Naive thymus-derived CD4-positive, alpha-beta T cell (primary cell): ENCODE measurements at regions of chr11 and their contacts with region 1.

Region 1: GRCh38 chr11:313787-314547 is at the start of gene IFITM1:
- DNase-seq: peak in 8 of 9 donors; percentile 55 to 80 (median 76)
- ATAC-seq: peak; percentile 72
- H3K4me3 ChIP-seq: peak within 1 kb of the TSS; percentile 71
- H3K4me3 Mint-ChIP-seq: peak within 1 kb of the TSS; percentile 88 to 100 (median 96)
- H3K27ac ChIP-seq: peak within 1 kb of the TSS; percentile 95
- H3K27ac Mint-ChIP-seq: peak within 1 kb of the TSS; percentile 94 to 99 (median 99)
- H3K4me1 ChIP-seq: peaks cover 13 to 37% of the 10 kb centered on the region in 2 donors
- H3K4me1 Mint-ChIP-seq: peaks cover 26 to 43% (median 34%) of the 10 kb centered on the region in 7 donors
- H3K27me3 ChIP-seq: no peaks in the 10 kb centered on the region
- H3K27me3 Mint-ChIP-seq: peaks cover 0 to 3% (median 0%) of the 10 kb centered on the region in 5 donors
- total RNA-seq, gene IFITM1: 97.4 to 985 (median 241) TPM

Region 2: GRCh38 chr11:236774-237767 is 76.9 kb before region 1 on chr11 and contains the start of gene PSMD13:
- CTCF ChIA-PET with region 1: no interaction called
- POLR2A ChIA-PET with region 1: interaction called, 7 read pairs
- intact Hi-C with region 1: loop called in 1 of 2 experiments (anchors 1 kb)
- DNase-seq: peak; percentile 82 to 92 (median 88)
- ATAC-seq: peak; percentile 88
- H3K4me3 ChIP-seq: peak within 1 kb of the TSS; percentile 100
- H3K4me3 Mint-ChIP-seq: peak within 1 kb of the TSS; percentile 84 to 99 (median 96)
- H3K27ac ChIP-seq: peak within 1 kb of the TSS; percentile 97
- H3K27ac Mint-ChIP-seq: peak within 1 kb of the TSS; percentile 84 to 100 (median 100)
- H3K4me1 ChIP-seq: peaks cover 17 to 23% of the 10 kb centered on the region in 2 donors
- H3K4me1 Mint-ChIP-seq: peaks cover 26 to 66% (median 53%) of the 10 kb centered on the region in 7 donors
- H3K27me3 ChIP-seq: no peaks in the 10 kb centered on the region
- H3K27me3 Mint-ChIP-seq: no peaks in the 10 kb centered on the region
- total RNA-seq, gene PSMD13: 64.3 to 172 (median 86.9) TPM

Region 3: DNA sequence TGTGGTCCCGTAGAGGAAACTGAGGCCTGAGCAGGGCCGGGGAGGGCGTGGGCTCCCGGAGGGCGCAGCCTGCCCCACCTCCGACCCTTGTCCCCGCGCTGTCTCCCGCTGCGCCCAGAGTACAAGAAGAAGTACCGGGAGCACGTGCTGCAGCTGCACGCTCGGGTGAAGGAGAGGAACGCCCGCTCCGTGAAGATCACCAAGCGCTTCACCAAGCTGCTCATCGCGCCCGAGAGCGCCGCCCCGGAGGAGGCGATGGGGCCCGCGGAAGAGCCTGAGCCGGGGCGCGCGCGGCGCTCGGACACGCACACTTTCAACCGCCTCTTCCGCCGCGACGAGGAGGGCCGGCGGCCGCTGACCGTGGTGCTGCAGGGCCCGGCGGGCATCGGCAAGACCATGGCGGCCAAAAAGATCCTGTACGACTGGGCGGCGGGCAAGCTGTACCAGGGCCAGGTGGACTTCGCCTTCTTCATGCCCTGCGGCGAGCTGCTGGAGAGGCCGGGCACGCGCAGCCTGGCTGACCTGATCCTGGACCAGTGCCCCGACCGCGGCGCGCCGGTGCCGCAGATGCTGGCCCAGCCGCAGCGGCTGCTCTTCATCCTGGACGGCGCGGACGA is 33.9 kb before region 1 on chr11:
- CTCF ChIA-PET with region 1: interaction called, 6 read pairs
- POLR2A ChIA-PET with region 1: interaction called, 26 read pairs
- intact Hi-C with region 1: loop called in 1 of 2 experiments (anchors 2 kb)
- DNase-seq: peak in 6 of 9 donors; percentile 40 to 59 (median 54)
- ATAC-seq: peak; percentile 70
- H3K4me3 ChIP-seq: peak overlapping the region; percentile 52
- H3K4me3 Mint-ChIP-seq: peak overlapping the region; percentile 80 to 93 (median 89)
- H3K27ac ChIP-seq: peak overlapping the region; percentile 61
- H3K27ac Mint-ChIP-seq: peak overlapping the region in 6 of 9 donors; percentile 75 to 90 (median 82)
- H3K4me1 ChIP-seq: peaks cover 22% of the 10 kb centered on the region in 2 donors
- H3K4me1 Mint-ChIP-seq: peaks cover 37 to 67% (median 52%) of the 10 kb centered on the region in 7 donors
- H3K27me3 ChIP-seq: no peaks in the 10 kb centered on the region
- H3K27me3 Mint-ChIP-seq: peaks cover 0 to 53% (median 0%) of the 10 kb centered on the region in 5 donors

Region 4: GRCh38 chr11:288328-289144 is 25.4 kb before region 1 on chr11 and contains the start of gene PGGHG:
- CTCF ChIA-PET with region 1: interaction called, 5 read pairs
- POLR2A ChIA-PET with region 1: interaction called, 22 read pairs
- intact Hi-C with region 1: no loop called
- DNase-seq: peak in 5 of 9 donors; percentile 40 to 72 (median 49)
- ATAC-seq: peak; percentile 65
- H3K4me3 ChIP-seq: peak within 1 kb of the TSS; percentile 64
- H3K4me3 Mint-ChIP-seq: peak within 1 kb of the TSS; percentile 88 to 100 (median 98)
- H3K27ac ChIP-seq: peak within 1 kb of the TSS; percentile 100
- H3K27ac Mint-ChIP-seq: peak within 1 kb of the TSS; percentile 89 to 100 (median 98)
- H3K4me1 ChIP-seq: peaks cover 16% of the 10 kb centered on the region in 2 donors
- H3K4me1 Mint-ChIP-seq: peaks cover 22 to 52% (median 38%) of the 10 kb centered on the region in 7 donors
- H3K27me3 ChIP-seq: no peaks in the 10 kb centered on the region
- H3K27me3 Mint-ChIP-seq: peaks cover 0 to 14% (median 0%) of the 10 kb centered on the region in 5 donors
- total RNA-seq, gene PGGHG: 325 to 656 (median 348) TPM

Region 5: DNA sequence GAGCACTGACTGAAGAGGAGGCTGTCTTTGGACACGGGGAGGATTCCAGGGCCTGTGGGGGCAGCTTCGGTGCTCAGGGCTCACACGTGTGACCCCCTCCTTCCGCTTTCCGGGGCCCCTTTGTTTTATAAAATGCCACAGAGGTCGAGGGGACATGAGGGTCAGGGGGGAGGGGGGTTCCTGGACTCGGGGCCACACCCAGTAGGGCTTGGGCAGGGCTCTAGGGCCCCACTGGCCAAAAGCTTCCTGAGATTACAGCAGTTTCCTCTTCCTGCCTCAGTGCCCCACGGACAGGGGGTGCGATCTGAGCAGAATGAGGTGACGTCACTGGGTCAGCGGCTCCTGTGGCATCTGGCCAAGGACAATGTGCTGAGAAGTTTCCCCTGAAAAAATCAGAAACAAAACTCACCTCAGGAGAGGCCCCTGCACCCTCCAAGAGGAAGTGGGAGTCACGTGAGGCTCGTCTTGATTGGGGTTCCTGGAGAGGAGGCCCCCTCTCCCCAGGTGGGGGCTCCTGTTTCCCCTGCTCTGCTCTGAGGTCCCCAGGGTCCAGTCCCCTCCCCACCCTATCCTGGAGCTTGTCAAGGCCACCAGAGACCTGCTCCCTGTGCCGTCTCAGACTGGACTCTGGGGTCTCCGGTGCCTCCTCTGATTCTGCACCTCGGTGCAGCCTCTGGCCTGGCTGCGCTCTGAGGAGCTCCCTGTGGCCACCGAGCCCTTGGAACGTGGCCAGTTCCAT is 13.0 kb after region 1 on chr11:
- CTCF ChIA-PET with region 1: interaction called, 5 read pairs
- POLR2A ChIA-PET with region 1: interaction called, 41 read pairs
- intact Hi-C with region 1: no loop called
- DNase-seq: peak in 8 of 9 donors; percentile 54 to 79 (median 64)
- ATAC-seq: peak; percentile 81
- H3K4me3 ChIP-seq: peak overlapping the region; percentile 50
- H3K4me3 Mint-ChIP-seq: peak overlapping the region; percentile 66 to 85 (median 78)
- H3K27ac ChIP-seq: peak overlapping the region; percentile 88
- H3K27ac Mint-ChIP-seq: peak overlapping the region; percentile 84 to 97 (median 94)
- H3K4me1 ChIP-seq: peaks cover 40 to 67% of the 10 kb centered on the region in 2 donors
- H3K4me1 Mint-ChIP-seq: peaks cover 48 to 80% (median 72%) of the 10 kb centered on the region in 7 donors
- H3K27me3 ChIP-seq: no peaks in the 10 kb centered on the region
- H3K27me3 Mint-ChIP-seq: no peaks in the 10 kb centered on the region

Region 6: DNA sequence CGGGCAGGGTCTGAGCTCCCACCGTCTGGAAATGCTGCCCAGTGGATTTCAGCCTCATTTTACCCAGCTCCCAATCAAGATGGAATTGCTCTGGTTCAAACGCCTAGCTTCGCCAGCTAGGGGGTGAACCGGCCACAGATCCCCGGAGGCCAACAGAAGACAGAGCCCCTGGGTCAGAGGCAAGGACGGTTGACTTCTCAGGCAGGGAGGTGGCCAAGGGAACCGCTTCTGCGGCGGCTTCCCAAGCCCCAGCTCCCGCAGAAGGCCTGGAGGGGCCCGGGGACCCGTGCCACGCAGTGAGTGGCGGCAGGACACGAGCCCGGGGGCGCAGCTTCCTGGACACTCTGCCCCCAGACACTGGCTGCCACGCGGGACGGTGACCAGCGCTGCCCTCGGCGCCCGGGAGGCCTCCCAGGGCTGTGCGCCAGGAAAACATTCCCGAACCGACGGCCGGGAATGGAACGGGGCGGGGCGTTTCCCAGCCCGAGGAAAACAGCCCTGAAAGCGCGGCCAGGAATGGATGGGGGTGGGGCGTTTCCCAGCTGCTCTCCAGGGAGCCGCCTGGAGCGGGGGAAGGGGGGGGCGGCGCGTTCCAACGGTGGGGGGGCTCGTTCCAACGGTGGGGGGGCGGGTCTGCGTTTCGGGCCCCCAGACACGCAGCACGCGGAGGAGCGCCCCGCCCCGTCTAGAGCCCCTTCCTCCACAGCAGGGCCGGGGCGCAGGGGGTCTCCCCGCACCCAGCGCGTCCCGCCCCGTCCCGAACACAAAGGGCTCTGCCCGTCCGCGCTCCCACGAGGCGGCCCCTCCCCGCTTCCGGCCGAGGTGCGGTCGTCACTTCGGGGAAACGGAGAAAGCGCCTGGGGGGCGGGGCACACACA is 41.9 kb after region 1 on chr11:
- CTCF ChIA-PET with region 1: interaction called, 36 read pairs
- POLR2A ChIA-PET with region 1: interaction called, 40 read pairs
- intact Hi-C with region 1: loop called (anchors 1 kb)
- DNase-seq: peak; percentile 74 to 92 (median 90)
- ATAC-seq: peak; percentile 89
- H3K4me3 ChIP-seq: peak overlapping the region; percentile 66
- H3K4me3 Mint-ChIP-seq: peak overlapping the region in 8 of 10 donors; percentile 83 to 93 (median 88)
- H3K27ac ChIP-seq: peak overlapping the region; percentile 97
- H3K27ac Mint-ChIP-seq: peak overlapping the region in 6 of 9 donors; percentile 89 to 99 (median 98)
- H3K4me1 ChIP-seq: peaks cover 9 to 19% of the 10 kb centered on the region in 2 donors
- H3K4me1 Mint-ChIP-seq: peaks cover 29 to 45% (median 37%) of the 10 kb centered on the region in 7 donors
- H3K27me3 ChIP-seq: no peaks in the 10 kb centered on the region
- H3K27me3 Mint-ChIP-seq: peaks cover 0 to 6% (median 0%) of the 10 kb centered on the region in 5 donors

Region 7: DNA sequence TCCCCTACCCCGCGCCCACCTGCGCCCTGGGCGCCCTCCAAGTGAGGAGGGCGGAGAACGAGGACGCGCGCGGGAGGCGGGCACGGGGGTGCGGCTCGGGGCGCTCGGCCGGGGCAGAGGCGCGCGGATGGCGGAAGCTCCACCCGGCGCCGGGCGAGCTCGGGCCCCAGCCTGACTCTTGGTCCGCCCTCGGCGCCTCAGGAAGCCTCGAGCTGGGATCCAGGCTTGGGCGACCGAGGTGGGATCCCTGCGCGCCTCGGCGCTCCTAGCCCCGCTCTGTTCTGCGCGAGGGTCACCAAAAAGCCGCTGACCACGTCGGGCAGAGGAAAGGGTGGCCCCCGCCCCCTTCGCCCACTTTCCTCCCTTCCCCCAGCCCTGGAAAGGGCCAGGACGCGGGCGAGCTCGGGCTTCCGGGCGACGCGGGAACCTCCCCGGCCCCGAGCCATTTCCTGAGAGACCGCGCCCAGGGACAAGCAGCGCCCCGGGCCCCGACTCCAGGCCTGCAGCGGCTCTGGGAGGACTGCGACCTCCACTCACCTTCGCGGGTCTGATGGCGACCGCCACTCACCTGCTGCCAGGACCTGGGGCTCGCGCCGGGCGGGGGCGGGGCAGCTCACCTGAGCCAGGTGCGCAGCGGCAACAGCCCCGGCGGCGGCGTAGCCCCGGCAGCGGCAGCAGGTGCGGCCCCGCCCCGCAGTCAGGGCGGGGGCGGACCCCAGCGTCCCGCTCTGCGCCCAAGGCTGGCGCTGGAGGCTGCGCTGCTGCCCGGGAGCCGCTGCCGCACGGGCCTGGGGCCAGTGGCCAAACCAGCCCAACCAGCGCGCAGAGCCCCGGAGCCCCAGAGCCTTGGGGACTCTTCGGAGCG is 103.0 kb after region 1 on chr11:
- CTCF ChIA-PET with region 1: no interaction called
- POLR2A ChIA-PET with region 1: interaction called, 7 read pairs
- intact Hi-C with region 1: loop called (anchors 5 kb)
- DNase-seq: peak; percentile 34 to 71 (median 47)
- ATAC-seq: peak; percentile 38
- H3K4me3 ChIP-seq: peak overlapping the region; percentile 92
- H3K4me3 Mint-ChIP-seq: peak overlapping the region; percentile 48 to 100 (median 96)
- H3K27ac ChIP-seq: peak overlapping the region; percentile 75
- H3K27ac Mint-ChIP-seq: peak overlapping the region in 4 of 9 donors; percentile 68 to 78 (median 70)
- H3K4me1 ChIP-seq: peaks cover 11 to 21% of the 10 kb centered on the region in 2 donors
- H3K4me1 Mint-ChIP-seq: peaks cover 10 to 37% (median 17%) of the 10 kb centered on the region in 7 donors
- H3K27me3 ChIP-seq: no peaks in the 10 kb centered on the region
- H3K27me3 Mint-ChIP-seq: no peaks in the 10 kb centered on the region